ENCODE measurements at regions of chr20 and their contacts with region 1.

Region 1: DNA sequence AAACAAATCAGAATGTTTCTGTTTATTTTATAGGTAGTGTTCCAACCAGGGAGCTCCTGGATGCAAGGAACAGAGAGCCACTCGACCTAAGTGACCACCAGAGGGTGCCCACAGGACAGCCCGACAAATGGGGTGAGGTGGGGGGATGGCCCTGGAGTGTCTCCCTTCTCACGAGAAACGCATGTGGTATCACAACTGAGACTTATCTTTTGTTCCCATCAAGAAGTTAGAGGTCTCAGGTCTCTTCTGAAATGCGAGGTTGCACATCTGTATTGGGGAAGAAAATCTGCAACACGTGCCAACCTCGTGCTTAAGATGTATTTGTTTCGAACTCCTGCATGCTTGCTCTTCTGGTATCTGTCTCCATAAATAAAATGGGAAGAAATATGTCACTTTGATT is 104.0 kb downstream of the ISM1 start:
- DNase-seq: no peak
- ATAC-seq: peak; percentile 59
- H3K4me3 ChIP-seq: no peak overlapping the region
- H3K27ac ChIP-seq: no peak overlapping the region
- H3K4me1 ChIP-seq: no peaks in the 10 kb centered on the region
- H3K27me3 ChIP-seq: no peaks in the 10 kb centered on the region

Region 2: DNA sequence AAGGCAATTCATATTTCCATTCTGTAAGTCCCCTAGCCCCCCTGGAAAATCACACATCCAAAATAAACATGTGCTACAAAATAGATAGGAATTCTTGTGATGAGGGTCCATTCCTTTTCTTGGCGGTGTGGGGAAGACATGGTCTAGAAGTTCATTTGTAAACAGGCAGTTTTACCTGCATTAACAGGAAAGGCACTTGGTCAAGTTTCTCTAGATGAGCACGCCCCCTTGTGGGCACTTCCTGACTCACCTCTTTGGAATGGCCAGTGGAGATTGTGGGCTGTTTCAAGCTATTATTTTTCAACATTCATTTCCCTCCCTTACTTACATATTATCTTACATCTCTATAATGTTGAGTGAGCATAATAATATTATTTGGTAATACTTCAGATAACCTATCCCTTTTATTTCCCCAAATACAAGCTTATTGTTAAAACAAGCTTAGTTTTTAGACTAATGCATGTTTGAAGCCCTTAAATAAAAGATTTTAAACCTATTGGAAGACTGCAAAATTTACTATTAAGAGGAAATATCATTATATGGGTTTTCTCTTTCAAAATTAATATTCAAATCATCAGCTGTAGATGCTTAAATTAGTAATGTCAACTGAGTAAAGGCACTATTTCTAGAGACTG is 221.6 kb after region 1 on chr20:
- intact Hi-C with region 1: loop called (anchors 5 to 10 kb)
- DNase-seq: peak; percentile 70 to 92
- ATAC-seq: peak; percentile 71
- H3K4me3 ChIP-seq: no peak overlapping the region
- H3K27ac ChIP-seq: no peak overlapping the region
- H3K4me1 ChIP-seq: no peaks in the 10 kb centered on the region
- H3K27me3 ChIP-seq: no peaks in the 10 kb centered on the region

Region 3: GRCh38 chr20:13755809-13756208 is 430.8 kb after region 1 on chr20:
- intact Hi-C with region 1: loop called (anchors 10 kb)
- DNase-seq: no peak
- ATAC-seq: no peak
- H3K4me3 ChIP-seq: no peak overlapping the region
- H3K27ac ChIP-seq: no peak overlapping the region
- H3K4me1 ChIP-seq: peaks cover 0 to 2% of the 10 kb centered on the region in 2 donors
- H3K27me3 ChIP-seq: no peaks in the 10 kb centered on the region

Region 4: GRCh38 chr20:13765299-13765698 is 440.3 kb after region 1 on chr20:
- intact Hi-C with region 1: loop called in 1 of 2 experiments (anchors 10 kb)
- DNase-seq: no peak
- ATAC-seq: no peak
- H3K4me3 ChIP-seq: no peak overlapping the region
- H3K27ac ChIP-seq: no peak overlapping the region
- H3K4me1 ChIP-seq: no peaks in the 10 kb centered on the region
- H3K27me3 ChIP-seq: peaks cover 0 to 2% of the 10 kb centered on the region in 2 donors

Region 5: GRCh38 chr20:13784893-13785715 is 460.1 kb after region 1 on chr20 and contains the starts of genes ESF1 and NDUFAF5:
- intact Hi-C with region 1: loop called in 1 of 2 experiments (anchors 10 kb)
- DNase-seq: peak; percentile 96 to 97
- ATAC-seq: peak; percentile 98
- H3K4me3 ChIP-seq: peak within 1 kb of the TSS; percentile 57 to 69
- H3K27ac ChIP-seq: peak within 1 kb of the TSS in 1 of 2 donors; percentile 13
- H3K4me1 ChIP-seq: peaks cover 0 to 8% of the 10 kb centered on the region in 2 donors
- H3K27me3 ChIP-seq: no peaks in the 10 kb centered on the region
- total RNA-seq, gene ESF1: 14.3 to 18.2 TPM
- total RNA-seq, gene NDUFAF5: 24.3 to 27.0 TPM